ENCODE measurements at regions of chr5 and their contacts with region 1.

Region 1: DNA sequence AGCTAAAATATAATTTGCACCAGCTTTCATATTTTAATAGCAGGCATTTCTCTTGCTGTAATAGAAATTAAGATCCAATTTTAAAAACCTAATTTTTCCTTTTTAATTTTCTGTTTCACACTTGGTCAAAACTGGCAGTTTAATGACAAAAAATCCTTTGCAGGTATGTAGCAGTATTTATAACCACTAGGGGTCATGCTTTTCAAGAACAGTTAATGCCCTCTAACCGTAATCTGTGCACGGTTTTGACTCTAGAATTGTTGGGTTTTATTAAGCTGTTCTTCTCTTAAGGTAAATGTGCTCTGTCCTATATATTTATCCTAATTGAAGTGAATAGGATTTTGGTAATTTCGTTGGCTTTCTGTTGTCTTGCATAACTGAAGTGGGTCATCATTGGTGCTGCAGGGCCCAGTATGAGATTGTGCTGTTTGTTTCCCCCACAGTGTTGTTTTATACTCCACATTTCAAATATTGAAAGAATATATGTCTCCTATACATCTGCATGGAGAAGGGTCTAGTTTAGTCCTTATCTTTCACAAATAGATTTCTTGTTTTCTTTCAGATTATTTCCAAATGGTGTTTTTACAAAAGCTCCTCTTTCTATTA is 107.4 kb downstream of the SCAMP1 start:
- DNase-seq: peak; percentile 36
- H3K4me3 ChIP-seq: no peak overlapping the region; a peak in 1 of 4 replicates
- H3K27ac ChIP-seq: no peak overlapping the region
- H3K4me1 ChIP-seq: no peaks in the 10 kb centered on the region; a peak in 1 of 4 replicates
- H3K27me3 ChIP-seq: no peaks in the 10 kb centered on the region
- CTCF ChIP-seq: peak; percentile 86
- EP300 ChIP-seq: no peak
- RAD21 ChIP-seq: peak; percentile 73

Region 2: DNA sequence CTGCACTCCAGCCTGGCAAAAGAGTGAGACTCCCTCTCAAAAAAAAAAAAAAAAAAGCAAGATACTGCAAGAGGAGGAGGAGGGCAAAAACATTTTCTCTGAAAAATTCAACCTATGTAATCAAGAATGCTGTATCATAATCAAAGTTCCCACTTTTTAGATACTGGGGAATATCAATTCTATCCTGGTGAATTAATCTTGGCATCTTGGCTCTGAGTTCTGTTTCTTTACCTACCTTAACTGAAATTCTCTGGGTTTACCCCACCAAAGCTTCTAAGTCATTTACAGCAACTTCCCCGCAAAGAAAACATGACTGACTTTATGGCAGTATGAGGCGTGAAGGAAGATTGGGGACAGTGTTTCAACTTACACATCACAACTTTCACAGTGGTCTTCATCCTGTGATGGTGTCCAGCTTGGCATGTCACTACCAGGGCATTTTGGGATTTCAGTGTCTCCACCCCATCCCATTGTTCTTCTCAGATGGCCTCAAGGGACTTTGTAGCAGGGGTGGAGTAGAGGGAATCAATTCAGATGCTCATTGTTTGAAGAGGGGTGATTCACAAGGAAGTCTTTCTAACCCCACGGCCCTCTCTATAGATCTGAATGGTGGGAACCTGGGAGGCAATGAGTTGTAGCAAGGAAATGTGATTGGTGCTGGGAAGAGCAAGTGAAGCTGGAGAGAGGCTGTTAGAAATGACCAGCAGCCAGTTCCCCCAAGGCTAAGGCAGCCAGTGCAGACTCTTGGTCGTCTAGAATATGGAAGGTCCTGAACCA is 23.0 kb after region 1 on chr5:
- CTCF ChIA-PET with region 1: interaction called, 10 read pairs
- POLR2A ChIA-PET with region 1: no interaction called
- DNase-seq: no peak
- H3K4me3 ChIP-seq: no peak overlapping the region
- H3K27ac ChIP-seq: peak overlapping the region; percentile 43 to 59
- H3K4me1 ChIP-seq: peaks cover 0 to 14% of the 10 kb centered on the region in 2 experiments; a peak in 1 of 4 replicates
- H3K27me3 ChIP-seq: no peaks in the 10 kb centered on the region
- CTCF ChIP-seq: no peak
- EP300 ChIP-seq: 0 out of 4 replicates have a peak, but pooled peaks of 1 of the 2 experiments have one; percentile 31
- RAD21 ChIP-seq: no peak

Region 3: GRCh38 chr5:78964887-78965286 is 497.0 kb after region 1 on chr5:
- CTCF ChIA-PET with region 1: interaction called, 17 read pairs
- POLR2A ChIA-PET with region 1: no interaction called
- DNase-seq: peak; percentile 49
- H3K4me3 ChIP-seq: no peak overlapping the region; a peak in 1 of 4 replicates
- H3K27ac ChIP-seq: no peak overlapping the region
- H3K4me1 ChIP-seq: peaks cover 0 to 4% of the 10 kb centered on the region in 2 experiments; a peak in 2 of 4 replicates
- H3K27me3 ChIP-seq: no peaks in the 10 kb centered on the region
- CTCF ChIP-seq: peak; percentile 72
- EP300 ChIP-seq: no peak
- RAD21 ChIP-seq: peak; percentile 95